Activated CD8-positive, alpha-beta T cell treated with anti-CD3 and anti-CD28 coated beads, Interleukin-2, amount 10 ng/mL, durations not matched to agents 7 days and 5 days (primary cell): ENCODE measurements at regions of chr13 and their contacts with region 1.

Region 1: DNA sequence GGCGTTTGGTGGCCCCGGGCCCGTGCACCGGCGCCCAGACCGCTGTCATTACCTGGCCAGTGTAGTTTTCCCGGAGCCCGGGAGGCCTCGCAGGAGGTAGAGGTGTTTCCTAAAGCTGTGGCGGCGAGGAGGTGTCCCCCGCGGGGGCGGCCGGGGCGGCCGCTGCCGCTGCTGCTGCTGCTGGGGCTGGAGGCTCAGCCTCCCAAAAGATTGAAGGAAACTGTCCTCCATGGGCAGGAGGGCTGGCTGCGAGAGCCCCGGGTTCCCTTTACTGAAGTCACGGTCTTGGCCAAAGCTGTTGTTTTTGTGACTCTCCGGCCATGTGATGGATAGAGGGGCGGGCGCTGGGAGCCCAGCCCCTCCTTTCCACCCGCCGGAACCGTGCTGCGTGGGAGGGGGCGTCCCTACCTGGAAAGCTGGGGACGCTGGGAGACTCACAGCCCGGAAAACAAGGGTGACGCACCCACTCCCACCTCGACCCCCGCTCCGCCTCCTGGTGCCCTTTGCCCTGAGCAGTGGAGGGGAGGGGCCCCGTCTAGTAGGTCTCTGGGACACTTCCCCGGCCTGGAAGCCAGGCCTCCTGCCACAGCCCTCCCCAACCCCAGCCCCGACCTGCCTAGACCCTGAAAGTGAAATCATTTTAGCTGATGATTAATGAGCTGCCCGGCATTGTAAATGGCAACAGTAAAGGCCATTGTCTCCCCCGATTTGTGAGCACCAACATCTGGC is at the start of gene N4BP2L1:
- DNase-seq: peak; percentile 82
- ATAC-seq: peak; percentile 60
- H3K4me3 Mint-ChIP-seq: peak within 1 kb of the TSS; percentile 86
- H3K27ac Mint-ChIP-seq: peak within 1 kb of the TSS; percentile 97
- H3K4me1 Mint-ChIP-seq: peaks cover 47% of the 10 kb centered on the region
- H3K27me3 Mint-ChIP-seq: no peaks in the 10 kb centered on the region
- total RNA-seq, gene N4BP2L1: 27.7 to 27.8 TPM

Region 2: GRCh38 chr13:32315238-32316027 is 112.6 kb before region 1 on chr13 and contains the starts of genes BRCA2 and ZAR1L:
- CTCF ChIA-PET with region 1: interaction called, 5 read pairs
- POLR2A ChIA-PET with region 1: interaction called, 64 read pairs
- DNase-seq: peak; percentile 93
- ATAC-seq: peak; percentile 92
- H3K4me3 Mint-ChIP-seq: peak within 1 kb of the TSS; percentile 89
- H3K27ac Mint-ChIP-seq: peak within 1 kb of the TSS; percentile 99
- H3K4me1 Mint-ChIP-seq: peaks cover 41% of the 10 kb centered on the region
- H3K27me3 Mint-ChIP-seq: no peaks in the 10 kb centered on the region
- total RNA-seq, gene BRCA2: 28.4 to 30.7 TPM
- total RNA-seq, gene ZAR1L: not detected

Region 3: DNA sequence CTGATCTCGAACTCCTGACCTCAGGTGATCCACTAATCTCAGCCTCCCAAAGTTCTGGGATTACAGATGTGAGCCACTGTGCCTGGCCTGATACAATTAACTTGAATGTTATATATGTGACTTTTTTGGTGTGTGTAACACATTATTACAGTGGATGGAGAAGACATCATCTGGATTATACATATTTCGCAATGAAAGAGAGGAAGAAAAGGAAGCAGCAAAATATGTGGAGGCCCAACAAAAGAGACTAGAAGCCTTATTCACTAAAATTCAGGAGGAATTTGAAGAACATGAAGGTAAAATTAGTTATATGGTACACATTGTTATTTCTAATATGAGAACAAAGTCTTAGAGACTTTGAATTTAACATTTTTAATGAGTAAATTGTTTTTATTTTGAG is 57.2 kb before region 1 on chr13:
- CTCF ChIA-PET with region 1: no interaction called
- POLR2A ChIA-PET with region 1: no interaction called
- DNase-seq: no peak
- ATAC-seq: no peak
- H3K4me3 Mint-ChIP-seq: no peak overlapping the region
- H3K27ac Mint-ChIP-seq: no peak overlapping the region
- H3K4me1 Mint-ChIP-seq: no peaks in the 10 kb centered on the region
- H3K27me3 Mint-ChIP-seq: no peaks in the 10 kb centered on the region

Region 4: GRCh38 chr13:32390048-32390447 is 38.0 kb before region 1 on chr13:
- CTCF ChIA-PET with region 1: interaction called, 5 read pairs
- POLR2A ChIA-PET with region 1: interaction called, 17 read pairs
- DNase-seq: peak; percentile 49
- ATAC-seq: peak; percentile 96
- H3K4me3 Mint-ChIP-seq: peak overlapping the region; percentile 16
- H3K27ac Mint-ChIP-seq: peak overlapping the region; percentile 75
- H3K4me1 Mint-ChIP-seq: peaks cover 38% of the 10 kb centered on the region
- H3K27me3 Mint-ChIP-seq: no peaks in the 10 kb centered on the region

Region 5: GRCh38 chr13:32443111-32443510 is 15.1 kb after region 1 on chr13:
- CTCF ChIA-PET with region 1: interaction called, 10 read pairs
- POLR2A ChIA-PET with region 1: interaction called, 3 read pairs
- DNase-seq: peak; percentile 67
- ATAC-seq: peak; percentile 81
- H3K4me3 Mint-ChIP-seq: no peak overlapping the region
- H3K27ac Mint-ChIP-seq: no peak overlapping the region
- H3K4me1 Mint-ChIP-seq: peaks cover 6% of the 10 kb centered on the region
- H3K27me3 Mint-ChIP-seq: no peaks in the 10 kb centered on the region

Region 6: DNA sequence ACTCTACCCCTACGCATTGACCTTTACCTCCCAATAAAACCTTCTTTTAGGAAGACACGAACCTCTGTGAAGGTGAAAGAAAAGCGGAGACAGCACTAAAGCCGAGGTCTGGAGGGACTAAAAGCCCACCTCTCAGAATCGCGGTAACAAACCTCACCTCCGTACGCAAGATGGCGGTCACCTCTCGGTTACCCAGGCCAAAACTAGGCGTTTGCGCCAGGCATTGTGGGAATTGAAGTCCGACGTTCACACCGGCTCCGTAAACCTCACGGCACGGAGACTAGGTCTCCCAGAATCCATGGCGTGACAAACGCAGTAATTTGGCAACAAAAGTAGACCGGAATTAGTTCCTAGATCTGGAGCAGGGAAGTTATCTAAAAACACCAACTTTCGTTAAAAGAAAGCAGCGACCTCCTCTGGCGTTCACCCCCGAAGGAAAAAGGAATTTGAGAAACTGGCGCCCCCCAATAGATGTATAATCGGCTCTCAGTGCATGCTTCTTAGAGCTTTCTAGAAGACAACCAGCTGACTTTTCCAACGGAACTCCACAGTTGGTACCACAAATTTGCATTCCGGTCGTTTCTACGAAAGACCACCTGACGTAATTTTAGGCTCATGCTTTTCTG is 110.7 kb after region 1 on chr13 and contains the start of gene N4BP2L2:
- CTCF ChIA-PET with region 1: no interaction called
- POLR2A ChIA-PET with region 1: interaction called, 26 read pairs
- DNase-seq: peak; percentile 95
- ATAC-seq: peak; percentile 98
- H3K4me3 Mint-ChIP-seq: peak within 1 kb of the TSS; percentile 97
- H3K27ac Mint-ChIP-seq: peak within 1 kb of the TSS; percentile 98
- H3K4me1 Mint-ChIP-seq: peaks cover 41% of the 10 kb centered on the region
- H3K27me3 Mint-ChIP-seq: no peaks in the 10 kb centered on the region
- total RNA-seq, gene N4BP2L2: 97.1 to 111 TPM

Region 7: GRCh38 chr13:32594157-32594738 is 166.2 kb after region 1 on chr13:
- CTCF ChIA-PET with region 1: no interaction called
- POLR2A ChIA-PET with region 1: no interaction called
- DNase-seq: no peak
- ATAC-seq: no peak
- H3K4me3 Mint-ChIP-seq: no peak overlapping the region
- H3K27ac Mint-ChIP-seq: no peak overlapping the region
- H3K4me1 Mint-ChIP-seq: peaks cover 41% of the 10 kb centered on the region
- H3K27me3 Mint-ChIP-seq: no peaks in the 10 kb centered on the region